ENCODE measurements at regions of chr14 and their contacts with region 1.

Region 1: GRCh38 chr14:23335623-23336022 is 14.4 kb downstream of the PABPN1 start:
- DNase-seq: no peak
- ATAC-seq: no peak
- H3K4me3 ChIP-seq: no peak overlapping the region
- H3K27ac ChIP-seq: no peak overlapping the region
- H3K4me1 ChIP-seq: no peaks in the 10 kb centered on the region
- H3K27me3 ChIP-seq: no peaks in the 10 kb centered on the region
- CTCF ChIP-seq: no peak

Region 2: GRCh38 chr14:23370221-23370620 is 34.6 kb after region 1 on chr14:
- intact Hi-C with region 1: loop called in 1 of 3 experiments (anchors 5 kb)
- DNase-seq: no peak
- ATAC-seq: no peak
- H3K4me3 ChIP-seq: no peak overlapping the region
- H3K27ac ChIP-seq: no peak overlapping the region
- H3K4me1 ChIP-seq: no peaks in the 10 kb centered on the region
- H3K27me3 ChIP-seq: peaks cover 0 to 6% (median 0%) of the 10 kb centered on the region in 4 donors
- CTCF ChIP-seq: no peak

Measured in pancreas (tissue), 10 donors.